BJ (cell line): ENCODE measurements at regions of chr2 and their contacts with region 1.

Region 1: DNA sequence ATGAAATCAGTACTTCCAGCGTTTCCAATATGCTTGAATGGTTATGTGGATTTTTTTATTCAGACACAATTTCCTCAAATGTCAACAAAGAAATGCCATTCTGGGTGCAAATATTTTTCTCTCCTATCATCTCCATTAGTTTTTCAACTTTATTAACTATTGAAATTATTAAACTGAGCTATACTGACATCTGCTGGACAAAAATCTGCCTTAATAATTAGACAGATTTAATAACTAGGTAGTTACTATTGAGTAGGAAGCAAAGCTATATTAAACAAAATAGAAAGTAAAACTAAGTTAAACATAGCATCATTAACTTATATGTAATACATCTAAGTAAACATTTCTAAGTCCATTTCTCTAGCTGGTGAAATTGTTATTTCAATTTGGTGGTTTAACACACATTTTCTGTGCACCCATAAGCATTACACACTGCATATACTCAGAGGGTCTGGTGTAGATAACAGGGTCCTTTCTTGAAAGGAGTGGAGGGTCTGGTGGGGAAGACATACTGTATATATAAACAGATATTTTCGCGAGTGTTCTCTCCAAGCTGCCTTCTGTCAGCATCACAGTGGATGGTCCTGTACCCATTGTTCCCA is 77.0 kb downstream of the LANCL1 start:
- DNase-seq: no peak
- H3K4me3 ChIP-seq: no peak overlapping the region
- H3K27me3 ChIP-seq: no peaks in the 10 kb centered on the region
- CTCF ChIP-seq: peak; percentile 28; the same call in 1 of the 2 replicates

Region 2: DNA sequence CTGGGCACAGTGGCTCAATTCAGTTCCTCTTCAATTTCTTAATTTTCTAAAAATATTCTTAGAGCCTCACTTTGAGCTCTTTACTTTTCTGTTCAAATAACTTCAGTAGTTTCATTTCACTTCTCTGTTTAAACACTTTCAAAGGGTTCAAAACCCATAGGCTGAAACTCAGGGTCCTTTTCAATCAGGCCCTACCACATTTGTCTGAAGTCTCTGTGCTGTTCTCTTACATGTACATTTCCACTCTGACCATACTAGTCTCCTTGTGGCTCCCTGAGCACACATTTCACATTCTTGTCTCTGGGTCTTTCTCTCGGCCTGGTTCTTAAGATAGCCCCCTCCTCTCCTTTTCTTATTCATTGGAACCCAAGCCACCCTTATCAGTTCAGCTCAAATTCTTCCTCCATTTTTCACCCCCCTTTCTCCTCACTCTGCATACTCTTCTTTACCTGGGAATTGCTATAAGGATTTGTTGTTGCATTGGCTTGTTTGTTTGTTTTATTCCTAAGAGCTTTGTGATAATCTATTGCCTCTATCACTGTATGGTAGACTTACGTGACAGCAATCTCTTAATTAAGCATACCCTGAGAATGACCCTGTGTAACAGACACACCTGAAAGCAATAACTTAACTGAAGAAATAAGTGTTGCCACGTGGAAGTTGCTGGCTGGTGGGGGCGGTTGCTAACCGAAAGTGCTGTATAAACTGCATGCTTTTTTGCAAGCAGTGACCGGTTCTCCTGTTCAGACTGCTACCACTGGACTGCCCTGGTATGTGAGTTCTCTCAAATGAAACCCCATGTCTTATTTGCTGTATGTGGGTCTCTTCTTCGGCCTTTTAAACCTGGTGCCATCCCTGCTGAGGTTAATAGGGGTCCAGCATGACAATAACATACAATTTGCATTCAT is 146.6 kb before region 1 on chr2:
- CTCF ChIA-PET with region 1: interaction called, 10 read pairs
- POLR2A ChIA-PET with region 1: no interaction called
- DNase-seq: no peak
- H3K4me3 ChIP-seq: no peak overlapping the region
- H3K27me3 ChIP-seq: no peaks in the 10 kb centered on the region
- CTCF ChIP-seq: no peak

Region 3: DNA sequence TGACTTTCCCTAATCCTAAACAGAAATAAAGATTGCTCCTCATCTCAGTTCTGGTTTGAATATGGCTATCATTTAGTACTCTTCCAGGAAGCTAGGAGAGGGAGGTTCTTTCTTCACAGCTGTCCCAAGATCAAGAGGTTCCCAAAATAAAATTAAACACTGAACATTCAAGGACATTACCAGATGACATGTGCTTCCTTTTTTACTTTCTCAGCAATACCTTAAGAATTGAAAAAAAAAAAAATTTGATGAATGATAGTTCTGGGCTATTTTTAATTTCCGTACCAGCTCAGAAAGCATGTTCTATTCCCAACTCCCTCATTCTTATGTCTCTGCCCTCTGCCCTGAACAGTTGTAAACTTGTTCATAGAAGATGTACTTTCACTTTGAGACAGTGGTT is 22.8 kb before region 1 on chr2:
- CTCF ChIA-PET with region 1: no interaction called
- POLR2A ChIA-PET with region 1: no interaction called
- DNase-seq: no peak
- H3K4me3 ChIP-seq: no peak overlapping the region
- H3K27me3 ChIP-seq: no peaks in the 10 kb centered on the region
- CTCF ChIP-seq: no peak